Activated T-helper 1 cell treated with anti-CD3 and anti-CD28 coated beads, Interleukin-12 subunit alpha, Interleukin-12 subunit beta, Interleukin-2, Interleukin-4 antibody, amounts not matched to agents 30 ng/mL and 10 ng/mL and 1 ng/mL, durations not matched to agents 14 hours and 24 hours and 36 hours (primary cell): ENCODE measurements at regions of chr6 and their contacts with region 1.

Region 1: DNA sequence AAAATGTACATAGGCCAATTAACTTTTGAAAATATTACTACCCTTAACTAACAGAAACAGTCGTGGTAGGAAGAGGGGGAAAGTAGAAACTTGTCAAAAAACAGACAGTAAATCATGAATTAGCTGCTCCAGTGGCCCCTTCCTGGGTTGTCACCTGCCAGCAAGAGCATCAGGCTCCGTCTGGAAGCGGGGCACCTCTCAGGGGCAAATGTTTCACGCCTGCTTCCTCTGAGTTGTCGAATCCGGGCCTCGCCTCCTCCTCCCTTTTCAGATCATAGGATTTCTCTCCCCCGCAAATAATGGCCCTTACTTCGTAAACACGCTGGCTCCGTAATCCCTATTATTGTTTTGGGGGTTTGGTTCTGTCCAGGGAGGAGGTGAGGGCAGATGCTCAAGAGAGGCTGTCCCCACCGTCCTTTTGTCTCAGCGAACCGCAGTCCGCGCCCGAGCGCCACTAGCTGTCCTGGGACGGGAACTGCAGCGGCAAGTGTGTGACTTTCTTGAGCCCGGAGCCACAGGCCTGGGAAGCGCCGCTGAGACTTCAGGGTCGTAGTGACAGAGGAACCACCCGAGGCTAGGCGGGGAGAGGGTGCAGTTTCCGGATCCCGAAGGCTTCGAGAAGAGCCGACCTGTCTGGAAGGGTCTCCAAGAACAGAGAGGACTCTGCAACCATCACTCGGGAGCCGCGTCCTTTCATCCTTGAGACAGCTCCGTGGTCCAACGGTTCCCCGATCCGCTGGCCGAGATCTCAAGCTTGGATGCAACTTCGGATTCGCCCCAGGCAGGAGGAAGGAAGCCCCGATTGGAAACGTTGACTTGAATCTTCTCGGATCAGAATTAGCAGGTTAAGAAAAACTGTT is 214.5 kb upstream of the ZNF184 start:
- DNase-seq: peak; percentile 74
- H3K4me3 Mint-ChIP-seq: peak overlapping the region; percentile 88
- H3K27ac Mint-ChIP-seq: peak overlapping the region; percentile 91
- H3K4me1 Mint-ChIP-seq: peaks cover 26% of the 10 kb centered on the region
- H3K27me3 Mint-ChIP-seq: peaks cover 24% of the 10 kb centered on the region

Region 2: DNA sequence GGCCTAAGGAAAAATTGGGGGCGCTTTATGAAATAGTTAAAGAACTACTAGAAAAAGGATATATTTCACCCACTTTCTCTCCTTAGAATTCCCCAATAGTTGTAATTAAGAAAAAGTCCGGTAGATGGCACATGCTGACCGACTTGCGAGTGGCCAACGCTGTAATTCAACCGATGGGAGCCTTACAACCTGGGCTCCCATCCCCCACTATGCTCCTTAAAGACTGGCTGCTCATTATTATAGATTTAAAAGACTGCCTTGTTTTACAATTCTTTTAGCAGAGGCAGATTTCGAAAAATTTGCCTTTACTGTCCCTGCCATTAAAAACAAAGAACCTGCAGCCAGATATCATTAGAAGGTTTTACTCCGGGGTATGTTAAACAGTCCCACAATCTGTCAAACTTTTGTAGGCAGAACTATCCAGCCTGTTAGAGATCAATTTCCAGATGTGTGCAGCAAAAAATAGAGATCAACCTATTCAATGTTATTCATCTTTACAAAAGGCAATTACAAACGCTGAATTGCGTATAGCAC is 498.4 kb before region 1 on chr6:
- intact Hi-C with region 1: loop called (anchors 1 kb)
- DNase-seq: peak; percentile 25
- H3K4me3 Mint-ChIP-seq: peak overlapping the region; percentile 93
- H3K27ac Mint-ChIP-seq: no peak overlapping the region
- H3K4me1 Mint-ChIP-seq: peaks cover 15% of the 10 kb centered on the region
- H3K27me3 Mint-ChIP-seq: peaks cover 4% of the 10 kb centered on the region

Region 3: GRCh38 chr6:27479319-27480182 is 207.8 kb before region 1 on chr6:
- intact Hi-C with region 1: loop called (anchors 1 kb)
- DNase-seq: peak; percentile 81
- H3K4me3 Mint-ChIP-seq: no peak overlapping the region
- H3K27ac Mint-ChIP-seq: no peak overlapping the region
- H3K4me1 Mint-ChIP-seq: no peaks in the 10 kb centered on the region
- H3K27me3 Mint-ChIP-seq: peaks cover 10% of the 10 kb centered on the region

Region 4: DNA sequence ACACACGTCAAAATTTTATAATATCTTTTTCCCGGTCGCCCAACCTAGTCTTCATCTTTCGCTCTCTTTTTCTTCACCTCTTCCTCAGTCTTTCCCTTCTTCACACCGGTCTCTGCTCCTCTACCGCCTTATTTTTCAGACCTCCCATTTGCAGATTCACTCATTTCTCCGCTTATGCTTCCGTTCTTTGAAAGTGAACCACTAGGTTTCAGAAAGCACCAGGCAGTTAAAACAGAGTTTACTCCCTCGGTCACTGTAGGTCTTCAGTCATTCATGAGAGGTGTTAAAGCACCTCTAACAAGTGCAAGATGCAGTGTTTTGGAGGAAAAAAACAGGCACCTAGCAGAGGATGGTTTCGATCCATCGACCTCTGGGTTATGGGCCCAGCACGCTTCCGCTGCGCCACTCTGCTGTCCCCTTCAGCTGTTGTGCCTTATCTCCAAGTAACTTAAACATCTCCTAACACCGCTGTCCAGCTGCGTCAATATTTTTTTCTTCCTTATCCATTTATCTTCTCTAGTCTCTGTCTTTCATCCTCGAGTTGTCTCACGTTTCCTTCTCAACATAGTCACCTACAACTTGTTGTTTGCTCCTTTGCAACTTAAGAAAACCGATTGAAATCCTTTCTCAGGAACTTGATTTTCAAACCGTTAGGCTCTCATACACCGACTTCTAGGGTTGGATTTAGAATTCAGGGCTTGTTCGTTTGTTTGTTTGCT is 94.7 kb before region 1 on chr6:
- intact Hi-C with region 1: loop called (anchors 2 kb)
- DNase-seq: peak; percentile 51
- H3K4me3 Mint-ChIP-seq: no peak overlapping the region
- H3K27ac Mint-ChIP-seq: no peak overlapping the region
- H3K4me1 Mint-ChIP-seq: peaks cover 6% of the 10 kb centered on the region
- H3K27me3 Mint-ChIP-seq: peaks cover 24% of the 10 kb centered on the region

Region 5: GRCh38 chr6:27742833-27743573 is 55.6 kb after region 1 on chr6:
- intact Hi-C with region 1: loop called (anchors 1 kb)
- DNase-seq: no peak
- H3K4me3 Mint-ChIP-seq: no peak overlapping the region
- H3K27ac Mint-ChIP-seq: no peak overlapping the region
- H3K4me1 Mint-ChIP-seq: peaks cover 20% of the 10 kb centered on the region
- H3K27me3 Mint-ChIP-seq: peaks cover 33% of the 10 kb centered on the region

Region 6: GRCh38 chr6:27761391-27761790 is 74.0 kb after region 1 on chr6:
- intact Hi-C with region 1: no loop called
- DNase-seq: no peak
- H3K4me3 Mint-ChIP-seq: no peak overlapping the region
- H3K27ac Mint-ChIP-seq: no peak overlapping the region
- H3K4me1 Mint-ChIP-seq: peaks cover 46% of the 10 kb centered on the region
- H3K27me3 Mint-ChIP-seq: peaks cover 2% of the 10 kb centered on the region